Panc1 (cell line): ENCODE measurements at regions of chr17 and their contacts with region 1.

Region 1: DNA sequence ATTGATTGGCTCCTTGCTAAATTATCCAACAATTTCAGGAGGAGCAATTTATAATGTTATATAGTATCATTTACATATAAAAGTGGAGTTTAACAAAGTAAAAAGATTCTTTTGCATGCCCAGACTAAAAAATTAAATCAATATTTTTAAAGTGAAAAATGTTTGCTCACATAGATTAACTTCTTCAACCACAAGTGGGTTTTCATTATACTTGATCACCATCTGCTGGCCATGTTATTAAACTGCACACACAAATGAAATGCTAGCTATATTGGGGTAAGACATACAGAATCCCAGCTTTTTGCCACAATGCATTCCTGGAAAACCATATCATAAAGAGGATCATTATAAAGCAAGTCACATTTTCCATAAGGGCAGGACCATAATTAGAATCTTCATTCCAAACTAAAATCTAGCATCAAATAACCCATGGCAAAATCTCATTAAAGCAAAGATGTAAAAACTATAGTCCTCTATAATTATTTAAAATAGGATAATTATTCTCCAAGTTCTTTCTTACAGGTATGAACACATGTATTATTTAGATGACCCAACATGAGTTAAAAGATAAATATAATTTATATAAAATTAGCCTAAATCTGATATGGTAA is 26.3 kb downstream of the CEP112 start:
- DNase-seq: peak; percentile 12
- ATAC-seq: no peak
- H3K4me3 ChIP-seq: no peak overlapping the region
- H3K27ac ChIP-seq: no peak overlapping the region
- H3K4me1 ChIP-seq: no peaks in the 10 kb centered on the region
- H3K27me3 ChIP-seq: no peaks in the 10 kb centered on the region
- CTCF ChIP-seq: peak; percentile 62; the same call in 1 of the 2 replicates

Region 2: DNA sequence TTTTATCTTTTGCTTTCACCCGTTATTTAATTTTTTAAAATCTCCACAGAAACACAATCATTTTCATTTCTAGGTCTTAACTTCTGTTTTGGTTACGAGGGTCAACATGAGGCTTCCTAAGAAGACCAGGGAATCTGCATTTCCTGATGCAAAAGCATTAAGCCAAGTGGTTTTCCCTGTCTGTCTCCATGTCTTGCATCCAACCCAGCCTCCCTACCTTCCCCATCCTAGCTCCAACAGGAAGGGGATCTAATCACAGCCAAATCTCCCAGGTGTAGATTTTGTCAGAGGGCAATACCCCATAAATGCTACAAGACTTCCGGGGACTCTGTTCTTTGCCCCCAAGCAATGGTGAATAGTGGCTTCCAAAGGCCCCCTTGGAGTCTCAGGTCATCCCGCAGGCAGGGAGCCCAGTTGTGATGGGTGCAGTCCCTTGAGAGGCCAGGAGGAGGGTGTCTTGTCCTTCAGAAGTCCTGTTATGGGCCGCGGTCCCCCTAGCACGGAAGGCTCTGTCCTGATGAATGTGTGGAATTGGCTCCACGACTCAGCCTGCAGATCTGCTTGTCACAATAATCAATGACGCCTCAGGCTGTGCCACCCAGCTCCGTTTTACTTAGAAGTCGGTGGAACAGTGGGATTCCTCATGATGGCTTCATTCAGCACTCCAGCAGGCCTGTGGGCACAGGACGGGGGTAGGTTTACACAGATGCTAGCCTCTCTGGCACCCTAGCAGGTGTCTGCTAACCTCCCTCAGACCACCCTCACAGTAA is 887.4 kb before region 1 on chr17:
- CTCF ChIA-PET with region 1: no interaction called
- POLR2A ChIA-PET with region 1: no interaction called
- in situ Hi-C with region 1: no loop called
- intact Hi-C with region 1: loop called (anchors 10 kb)
- DNase-seq: no peak
- ATAC-seq: peak; percentile 95
- H3K4me3 ChIP-seq: no peak overlapping the region
- H3K27ac ChIP-seq: no peak overlapping the region
- H3K4me1 ChIP-seq: peaks cover 3% of the 10 kb centered on the region; the same call in 1 of the 2 replicates
- H3K27me3 ChIP-seq: no peaks in the 10 kb centered on the region; the same call in 1 of the 2 replicates
- CTCF ChIP-seq: peak; percentile 70

Region 3: DNA sequence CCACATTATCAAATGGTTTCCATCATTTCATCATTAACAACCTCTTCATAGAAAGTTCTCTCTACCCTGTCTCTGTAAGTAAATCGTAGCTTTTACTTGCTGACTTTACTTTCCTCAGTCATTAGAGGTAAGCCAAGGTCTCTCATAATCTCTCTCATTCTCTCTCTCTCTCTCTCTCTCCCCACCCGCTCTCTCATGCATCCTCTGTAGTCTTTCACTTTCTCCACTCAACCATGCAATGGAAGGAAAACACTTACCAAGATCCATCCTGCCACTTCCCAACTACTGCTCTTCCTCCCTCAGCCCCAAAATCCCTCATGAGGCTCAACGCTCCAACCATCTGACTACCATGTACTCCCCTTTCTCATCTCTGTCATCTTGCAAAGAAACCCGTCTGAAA is 20.2 kb after region 1 on chr17:
- CTCF ChIA-PET with region 1: no interaction called
- POLR2A ChIA-PET with region 1: no interaction called
- in situ Hi-C with region 1: no loop called
- intact Hi-C with region 1: no loop called
- DNase-seq: no peak
- ATAC-seq: no peak
- H3K4me3 ChIP-seq: no peak overlapping the region
- H3K27ac ChIP-seq: no peak overlapping the region
- H3K4me1 ChIP-seq: peaks cover 5% of the 10 kb centered on the region
- H3K27me3 ChIP-seq: no peaks in the 10 kb centered on the region
- CTCF ChIP-seq: no peak

Region 4: DNA sequence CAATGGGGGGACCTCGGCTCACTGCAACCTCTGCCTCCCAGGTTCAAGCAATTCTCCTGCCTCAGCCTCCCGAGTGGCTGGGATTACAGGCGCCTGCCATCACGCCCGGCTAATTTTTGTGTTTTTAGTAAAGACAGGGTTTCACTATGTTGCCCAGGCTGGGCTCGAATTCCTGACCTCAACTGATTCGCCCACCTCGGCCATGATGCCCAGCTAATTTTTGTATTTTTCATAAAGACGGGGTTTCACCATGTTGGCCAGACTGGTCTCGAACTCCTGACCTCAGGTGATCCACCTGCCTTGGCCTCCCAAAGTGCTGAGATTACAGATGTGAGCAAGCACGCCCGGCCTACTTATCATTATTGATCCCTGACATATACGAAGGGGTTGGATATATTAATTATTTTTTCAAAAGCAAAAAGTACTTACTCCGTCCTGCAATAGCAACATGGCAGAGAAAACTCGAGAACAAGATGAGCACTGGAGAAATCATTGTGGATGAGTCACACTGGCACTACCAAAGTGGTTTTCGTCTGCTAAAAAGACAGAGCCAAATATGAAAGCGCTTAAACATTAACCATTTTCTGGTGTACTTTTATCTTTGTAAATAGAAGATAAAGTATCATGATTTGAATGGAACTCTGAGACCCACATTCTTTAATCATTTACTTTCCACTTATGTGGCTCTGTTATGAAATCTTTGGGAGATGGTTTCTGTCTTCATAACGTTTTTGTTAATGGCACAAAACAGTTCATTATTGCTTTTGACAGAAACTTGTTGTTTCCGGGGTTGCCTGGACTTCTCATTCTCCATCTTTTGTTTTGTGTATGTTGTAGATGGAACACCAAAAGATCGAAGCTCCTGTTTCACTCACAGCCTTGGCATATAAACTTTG is 63.5 kb after region 1 on chr17 and contains the start of gene APOH:
- CTCF ChIA-PET with region 1: no interaction called
- POLR2A ChIA-PET with region 1: no interaction called
- in situ Hi-C with region 1: no loop called
- intact Hi-C with region 1: no loop called
- DNase-seq: no peak
- ATAC-seq: no peak
- H3K4me3 ChIP-seq: no peak within 1 kb of the TSS
- H3K27ac ChIP-seq: no peak within 1 kb of the TSS
- H3K4me1 ChIP-seq: no peaks in the 10 kb centered on the region
- H3K27me3 ChIP-seq: no peaks in the 10 kb centered on the region
- CTCF ChIP-seq: no peak
- total RNA-seq, gene APOH: 1.2 TPM